MCF 10A (cell line): ENCODE measurements at regions of chr12 and their contacts with region 1.

Region 1: DNA sequence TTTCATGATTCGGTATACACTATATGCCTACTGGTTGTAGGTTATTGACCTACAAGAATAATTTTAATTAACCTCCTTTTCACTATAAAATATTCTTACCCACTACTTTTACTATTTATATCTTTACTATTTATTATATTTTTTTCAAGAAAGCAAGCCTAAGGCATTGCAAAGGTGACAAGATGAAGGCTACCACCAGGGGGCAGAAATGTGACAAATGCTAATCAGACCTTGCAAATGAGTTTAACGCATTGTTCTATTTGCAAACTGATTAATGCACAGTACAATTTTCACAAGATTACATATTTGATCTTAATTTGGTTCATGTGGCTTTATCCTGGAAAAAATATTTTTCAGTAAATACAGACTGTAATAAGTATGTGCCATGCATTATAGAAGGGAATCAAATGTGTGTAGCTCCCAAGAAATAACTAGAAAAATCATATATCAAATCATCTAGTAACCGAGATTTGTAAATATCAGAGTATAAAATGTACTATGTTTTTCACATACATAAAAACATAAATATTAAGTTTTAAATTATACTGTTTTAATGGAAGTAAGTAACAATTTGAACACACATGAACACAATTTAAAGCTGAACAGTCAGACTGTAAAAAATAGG is 107.0 kb downstream of the ADAMTS20 start:
- DNase-seq: peak; percentile 74
- H3K4me3 Mint-ChIP-seq: no peak overlapping the region
- H3K27ac Mint-ChIP-seq: no peak overlapping the region
- H3K4me1 Mint-ChIP-seq: no peaks in the 10 kb centered on the region
- H3K27me3 Mint-ChIP-seq: peaks cover 40% of the 10 kb centered on the region
- CTCF ChIP-seq: peak; percentile 70

Region 2: GRCh38 chr12:43381879-43382278 is 63.2 kb before region 1 on chr12:
- CTCF ChIA-PET with region 1: no interaction called
- POLR2A ChIA-PET with region 1: no interaction called
- intact Hi-C with region 1: no loop called
- DNase-seq: no peak
- H3K4me3 Mint-ChIP-seq: no peak overlapping the region
- H3K27ac Mint-ChIP-seq: no peak overlapping the region
- H3K4me1 Mint-ChIP-seq: no peaks in the 10 kb centered on the region
- H3K27me3 Mint-ChIP-seq: peaks cover 11% of the 10 kb centered on the region
- CTCF ChIP-seq: no peak

Region 3: DNA sequence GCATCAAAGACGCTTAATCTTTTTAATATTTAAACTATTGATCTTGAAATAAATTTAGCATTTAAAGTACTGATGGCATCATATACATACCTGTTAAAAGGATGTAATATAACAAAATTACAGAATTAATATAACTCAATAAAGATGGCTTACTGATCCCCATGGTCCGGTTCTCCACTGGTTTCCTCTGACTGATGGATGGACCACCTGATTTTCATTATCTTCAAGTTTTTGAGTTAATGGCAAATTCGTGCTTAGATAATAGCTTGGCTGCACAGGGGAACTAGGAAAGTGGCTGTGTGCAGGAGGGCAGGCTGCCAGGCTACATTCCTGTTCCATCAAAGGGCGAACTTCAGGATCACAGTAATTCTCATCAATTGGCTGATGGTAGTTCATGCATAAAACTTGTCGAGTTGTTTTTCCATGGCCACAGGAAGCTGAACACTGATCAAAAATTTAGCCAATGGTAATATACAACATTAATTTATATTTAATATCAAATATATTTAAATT is 16.9 kb before region 1 on chr12:
- CTCF ChIA-PET with region 1: interaction called, 33 read pairs
- POLR2A ChIA-PET with region 1: interaction called, 3 read pairs
- intact Hi-C with region 1: no loop called
- DNase-seq: no peak
- H3K4me3 Mint-ChIP-seq: no peak overlapping the region
- H3K27ac Mint-ChIP-seq: no peak overlapping the region
- H3K4me1 Mint-ChIP-seq: no peaks in the 10 kb centered on the region
- H3K27me3 Mint-ChIP-seq: peaks cover 49% of the 10 kb centered on the region
- CTCF ChIP-seq: no peak

Region 4: GRCh38 chr12:43459285-43459684 is 14.2 kb after region 1 on chr12:
- CTCF ChIA-PET with region 1: interaction called, 16 read pairs
- POLR2A ChIA-PET with region 1: no interaction called
- intact Hi-C with region 1: no loop called
- DNase-seq: no peak
- H3K4me3 Mint-ChIP-seq: no peak overlapping the region
- H3K27ac Mint-ChIP-seq: no peak overlapping the region
- H3K4me1 Mint-ChIP-seq: no peaks in the 10 kb centered on the region
- H3K27me3 Mint-ChIP-seq: peaks cover 25% of the 10 kb centered on the region
- CTCF ChIP-seq: no peak